ENCODE measurements at regions of chr14 and their contacts with region 1.

Region 1: GRCh38 chr14:62079038-62079437 is 316.8 kb downstream of the SNAPC1 start:
- DNase-seq: no peak
- ATAC-seq: no peak
- H3K4me3 ChIP-seq: no peak overlapping the region
- H3K4me3 Mint-ChIP-seq: no peak overlapping the region
- H3K27ac ChIP-seq: peak overlapping the region; percentile 69
- H3K27ac Mint-ChIP-seq: peak overlapping the region; percentile 75 to 91
- H3K4me1 ChIP-seq: peaks cover 31% of the 10 kb centered on the region
- H3K4me1 Mint-ChIP-seq: peaks cover 49 to 52% of the 10 kb centered on the region in 2 donors
- H3K27me3 ChIP-seq: no peaks in the 10 kb centered on the region
- H3K27me3 Mint-ChIP-seq: peaks cover 0 to under 1% of the 10 kb centered on the region in 2 donors
- CTCF ChIP-seq: no peak

Region 2: GRCh38 chr14:62117010-62117750 is 38.1 kb after region 1 on chr14:
- intact Hi-C with region 1: loop called (anchors 5 kb)
- DNase-seq: peak; percentile 55 to 73
- ATAC-seq: peak; percentile 86 to 99 (median 99)
- H3K4me3 ChIP-seq: peak overlapping the region; percentile 37
- H3K4me3 Mint-ChIP-seq: peak overlapping the region; percentile 84
- H3K27ac ChIP-seq: no peak overlapping the region
- H3K27ac Mint-ChIP-seq: peak overlapping the region in 1 of 2 donors; percentile 76
- H3K4me1 ChIP-seq: peaks cover 14% of the 10 kb centered on the region
- H3K4me1 Mint-ChIP-seq: peaks cover 12% of the 10 kb centered on the region in 2 donors
- H3K27me3 ChIP-seq: peaks cover 20% of the 10 kb centered on the region
- H3K27me3 Mint-ChIP-seq: peaks cover 17 to 51% of the 10 kb centered on the region in 2 donors
- CTCF ChIP-seq: peak; percentile 47

Measured in natural killer cell (primary cell).